Activated B cell treated with CpG ODN at 0.5 μM for 24 hours (primary cell): ENCODE measurements at regions of chr16 and their contacts with region 1.

Region 1: DNA sequence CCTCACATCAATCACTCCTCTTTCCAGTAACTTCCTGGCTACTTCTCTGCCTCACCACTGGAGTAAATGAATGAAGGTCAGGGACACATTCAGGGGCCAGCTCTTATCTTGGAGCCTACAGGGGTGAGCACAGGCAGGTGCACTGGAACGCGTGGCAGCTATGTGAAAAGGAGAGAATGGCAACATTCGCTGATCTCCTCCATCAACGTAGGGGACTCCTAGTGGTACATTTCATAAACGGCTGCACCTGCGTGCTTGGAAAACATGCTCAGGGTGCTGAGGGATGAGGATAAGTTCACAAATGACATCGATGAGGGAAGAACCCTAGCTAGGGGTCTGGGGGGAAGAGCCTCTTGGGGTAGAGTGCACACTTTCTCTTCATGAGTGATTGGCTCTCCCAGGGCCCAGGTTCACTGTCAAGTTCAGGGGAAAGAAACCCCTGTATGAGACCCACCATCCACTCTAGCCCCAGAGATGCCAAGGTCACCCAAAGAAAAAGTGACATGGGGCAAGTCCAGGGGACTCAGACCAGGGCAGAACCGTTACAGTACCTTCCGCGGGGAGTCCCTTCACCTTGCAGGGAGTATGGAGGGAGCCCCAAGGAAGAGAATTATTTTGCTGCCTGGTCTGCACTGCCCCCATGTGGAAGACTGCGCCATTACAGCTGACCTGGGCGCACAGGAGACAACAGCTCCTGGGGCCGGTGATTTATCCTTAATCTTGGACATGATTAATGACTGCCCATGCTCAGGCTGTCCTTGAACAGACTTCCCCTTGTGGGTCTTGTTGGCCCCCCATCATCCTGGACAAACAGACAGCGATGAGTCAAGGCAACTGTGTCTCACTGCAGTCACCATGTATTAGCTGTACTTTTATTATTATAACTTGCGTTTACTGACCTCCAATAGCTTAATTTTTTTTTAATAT is 30.1 kb downstream of the VAC14 start:
- DNase-seq: peak; percentile 36
- ATAC-seq: peak; percentile 67
- H3K4me3 Mint-ChIP-seq: no peak overlapping the region
- H3K27ac Mint-ChIP-seq: no peak overlapping the region
- H3K4me1 Mint-ChIP-seq: no peaks in the 10 kb centered on the region
- H3K27me3 Mint-ChIP-seq: no peaks in the 10 kb centered on the region
- CTCF ChIP-seq: no peak

Region 2: DNA sequence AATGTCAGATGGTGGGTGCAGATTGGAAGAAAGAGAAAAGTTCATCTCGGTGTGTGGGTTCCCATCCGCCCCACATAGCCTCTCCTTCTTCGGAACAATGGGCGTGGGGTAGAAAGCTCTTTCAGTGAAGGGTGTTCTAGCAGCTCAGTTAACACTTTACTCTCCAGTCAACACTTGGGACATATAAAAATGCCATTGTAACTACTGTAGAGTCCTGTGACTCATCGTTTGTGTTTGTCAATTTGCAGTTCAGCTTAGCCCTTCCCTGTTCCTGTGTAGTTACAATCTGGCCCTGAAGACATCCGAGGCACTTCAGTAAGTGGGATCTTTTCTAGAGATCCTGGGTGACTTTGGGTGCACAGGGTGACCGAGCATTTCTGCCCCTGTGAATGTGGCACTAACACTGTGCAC is 608.8 kb before region 1 on chr16:
- CTCF ChIA-PET with region 1: no interaction called
- POLR2A ChIA-PET with region 1: no interaction called
- intact Hi-C with region 1: loop called (anchors 10 kb)
- DNase-seq: no peak
- ATAC-seq: no peak
- H3K4me3 Mint-ChIP-seq: no peak overlapping the region
- H3K27ac Mint-ChIP-seq: peak overlapping the region; percentile 4
- H3K4me1 Mint-ChIP-seq: peaks cover 3% of the 10 kb centered on the region
- H3K27me3 Mint-ChIP-seq: no peaks in the 10 kb centered on the region
- CTCF ChIP-seq: no peak

Region 3: GRCh38 chr16:70610273-70611223 is 160.3 kb before region 1 on chr16:
- CTCF ChIA-PET with region 1: no interaction called
- POLR2A ChIA-PET with region 1: no interaction called
- intact Hi-C with region 1: no loop called
- DNase-seq: no peak
- ATAC-seq: no peak
- H3K4me3 Mint-ChIP-seq: no peak overlapping the region
- H3K27ac Mint-ChIP-seq: no peak overlapping the region
- H3K4me1 Mint-ChIP-seq: no peaks in the 10 kb centered on the region
- H3K27me3 Mint-ChIP-seq: no peaks in the 10 kb centered on the region
- CTCF ChIP-seq: no peak

Region 4: GRCh38 chr16:70743791-70744190 is 27.1 kb before region 1 on chr16:
- CTCF ChIA-PET with region 1: no interaction called
- POLR2A ChIA-PET with region 1: no interaction called
- intact Hi-C with region 1: no loop called
- DNase-seq: no peak
- ATAC-seq: no peak
- H3K4me3 Mint-ChIP-seq: no peak overlapping the region
- H3K27ac Mint-ChIP-seq: no peak overlapping the region
- H3K4me1 Mint-ChIP-seq: peaks cover 12% of the 10 kb centered on the region
- H3K27me3 Mint-ChIP-seq: no peaks in the 10 kb centered on the region
- CTCF ChIP-seq: no peak

Region 5: GRCh38 chr16:71311553-71312158 is 540.8 kb after region 1 on chr16:
- CTCF ChIA-PET with region 1: interaction called, 12 read pairs
- POLR2A ChIA-PET with region 1: no interaction called
- intact Hi-C with region 1: no loop called
- DNase-seq: no peak
- ATAC-seq: peak; percentile 45
- H3K4me3 Mint-ChIP-seq: no peak overlapping the region
- H3K27ac Mint-ChIP-seq: no peak overlapping the region
- H3K4me1 Mint-ChIP-seq: no peaks in the 10 kb centered on the region
- H3K27me3 Mint-ChIP-seq: peaks cover 34% of the 10 kb centered on the region
- CTCF ChIP-seq: no peak

Region 6: DNA sequence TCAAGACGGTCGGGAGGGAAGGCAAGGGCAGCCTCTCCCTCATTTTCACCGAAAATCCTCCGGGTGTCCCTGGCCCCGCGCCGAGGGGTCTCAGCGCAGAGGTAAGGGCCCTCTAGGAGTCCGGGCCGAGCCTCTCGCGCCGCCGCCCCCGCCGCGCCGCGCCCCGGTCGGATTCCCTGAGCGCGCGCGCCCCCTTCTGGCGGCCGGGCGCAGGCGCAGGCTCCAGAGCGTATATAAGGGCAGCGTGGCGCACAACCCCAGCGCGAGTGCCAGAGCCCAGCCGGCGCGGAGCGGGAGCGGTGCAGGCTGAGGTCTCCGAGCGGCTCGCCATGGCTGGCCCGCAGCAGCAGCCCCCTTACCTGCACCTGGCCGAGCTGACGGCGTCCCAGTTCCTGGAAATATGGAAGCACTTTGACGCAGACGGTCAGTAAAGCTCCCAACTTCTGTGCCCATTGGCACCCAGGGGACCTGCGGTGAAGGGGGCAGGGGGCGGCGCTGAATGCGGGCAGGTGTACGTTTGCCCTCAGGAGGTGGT is 587.6 kb after region 1 on chr16 and contains the start of gene CALB2:
- CTCF ChIA-PET with region 1: interaction called, 3 read pairs
- POLR2A ChIA-PET with region 1: no interaction called
- intact Hi-C with region 1: loop called (anchors 2 kb)
- DNase-seq: peak; percentile 68
- ATAC-seq: peak; percentile 90
- H3K4me3 Mint-ChIP-seq: no peak within 1 kb of the TSS
- H3K27ac Mint-ChIP-seq: no peak within 1 kb of the TSS
- H3K4me1 Mint-ChIP-seq: peaks cover 3% of the 10 kb centered on the region
- H3K27me3 Mint-ChIP-seq: peaks cover 26% of the 10 kb centered on the region
- CTCF ChIP-seq: peak; percentile 52
- total RNA-seq, gene CALB2: not detected in 2 replicates